ENCODE measurements at regions of chr10 and their contacts with region 1.

Region 1: DNA sequence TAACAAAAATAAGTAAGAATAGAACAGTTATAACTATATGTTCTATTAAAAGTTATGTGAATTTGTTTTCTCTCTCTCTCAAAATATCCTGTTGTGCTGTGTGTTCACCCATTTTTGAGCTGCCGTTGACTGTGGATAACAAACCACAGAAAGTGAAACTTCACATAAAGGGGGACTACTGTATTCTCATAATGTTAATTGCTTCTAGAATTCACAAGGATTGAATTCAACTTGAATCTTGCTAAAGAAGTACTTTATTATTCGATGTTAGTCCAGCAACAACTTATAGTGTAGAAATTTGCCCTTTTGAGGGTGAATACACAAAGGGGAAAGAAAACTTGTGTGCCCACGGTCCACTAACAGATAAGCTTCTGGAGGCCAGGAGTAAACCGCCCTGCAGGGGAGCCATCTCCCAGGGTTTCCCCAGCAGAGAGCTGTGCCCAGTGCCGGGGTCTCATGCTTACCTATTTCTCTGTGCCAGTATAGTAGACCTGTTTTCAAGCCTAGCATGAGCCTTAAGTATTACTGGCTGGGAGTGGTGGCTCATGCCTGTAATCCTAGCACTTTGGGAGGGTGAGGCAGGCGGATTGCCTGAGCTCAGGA is 87.1 kb downstream of the KAT6B start:
- DNase-seq: no peak
- ATAC-seq: peak; percentile 35; the same call in 1 of the 3 replicates
- H3K4me3 ChIP-seq: no peak overlapping the region
- H3K27ac ChIP-seq: no peak overlapping the region
- H3K4me1 ChIP-seq: no peaks in the 10 kb centered on the region; a peak in 1 of 5 replicates
- H3K27me3 ChIP-seq: no peaks in the 10 kb centered on the region
- CTCF ChIP-seq: no peak
- EP300 ChIP-seq: no peak
- POLR2A ChIP-seq: no peak
- RAD21 ChIP-seq: no peak

Region 2: DNA sequence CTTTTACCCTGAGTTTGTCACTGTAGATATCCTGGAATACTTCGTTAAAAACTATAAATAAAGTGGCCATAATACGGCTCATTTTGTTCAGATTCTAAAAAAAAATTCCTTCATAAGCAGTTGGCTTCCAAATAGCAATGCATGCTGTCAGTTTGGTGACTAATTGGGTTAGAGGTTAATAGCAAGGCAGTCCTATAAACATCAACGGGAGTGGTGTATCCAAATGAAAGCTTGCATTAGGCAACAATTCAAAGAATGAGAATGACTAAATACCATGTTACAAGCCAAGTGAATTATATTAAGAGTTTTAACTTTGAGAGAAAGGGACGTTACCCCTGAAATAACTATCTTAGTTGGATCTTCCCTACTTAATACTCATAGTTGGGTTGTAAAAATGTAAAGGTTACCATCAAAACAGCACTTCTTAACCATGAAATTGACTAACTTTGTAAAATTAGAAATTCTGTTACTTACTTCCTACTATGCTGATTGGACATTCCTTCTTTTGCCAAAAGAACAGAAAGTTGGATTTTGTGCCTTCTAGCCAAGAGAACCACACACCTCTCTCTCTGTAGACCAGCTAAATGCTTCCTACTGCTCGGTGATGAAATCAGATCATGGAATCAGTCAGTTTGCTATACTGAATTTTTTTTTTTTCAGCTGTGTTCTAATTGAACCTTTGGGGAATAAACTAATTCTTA is 10.9 kb after region 1 on chr10:
- CTCF ChIA-PET with region 1: no interaction called
- POLR2A ChIA-PET with region 1: interaction called, 11 read pairs
- in situ Hi-C with region 1: no loop called
- intact Hi-C with region 1: no loop called
- DNase-seq: no peak
- ATAC-seq: no peak
- H3K4me3 ChIP-seq: no peak overlapping the region
- H3K27ac ChIP-seq: no peak overlapping the region
- H3K4me1 ChIP-seq: peaks cover 9 to 14% of the 10 kb centered on the region in 2 experiments; a peak in 3 of 5 replicates
- H3K27me3 ChIP-seq: no peaks in the 10 kb centered on the region
- CTCF ChIP-seq: no peak
- EP300 ChIP-seq: no peak
- POLR2A ChIP-seq: no peak
- RAD21 ChIP-seq: no peak